Activated CD8-positive, alpha-beta T cell treated with anti-CD3 and anti-CD28 coated beads for 36 hours (primary cell): ENCODE measurements at regions of chr2 and their contacts with region 1.

Region 1: DNA sequence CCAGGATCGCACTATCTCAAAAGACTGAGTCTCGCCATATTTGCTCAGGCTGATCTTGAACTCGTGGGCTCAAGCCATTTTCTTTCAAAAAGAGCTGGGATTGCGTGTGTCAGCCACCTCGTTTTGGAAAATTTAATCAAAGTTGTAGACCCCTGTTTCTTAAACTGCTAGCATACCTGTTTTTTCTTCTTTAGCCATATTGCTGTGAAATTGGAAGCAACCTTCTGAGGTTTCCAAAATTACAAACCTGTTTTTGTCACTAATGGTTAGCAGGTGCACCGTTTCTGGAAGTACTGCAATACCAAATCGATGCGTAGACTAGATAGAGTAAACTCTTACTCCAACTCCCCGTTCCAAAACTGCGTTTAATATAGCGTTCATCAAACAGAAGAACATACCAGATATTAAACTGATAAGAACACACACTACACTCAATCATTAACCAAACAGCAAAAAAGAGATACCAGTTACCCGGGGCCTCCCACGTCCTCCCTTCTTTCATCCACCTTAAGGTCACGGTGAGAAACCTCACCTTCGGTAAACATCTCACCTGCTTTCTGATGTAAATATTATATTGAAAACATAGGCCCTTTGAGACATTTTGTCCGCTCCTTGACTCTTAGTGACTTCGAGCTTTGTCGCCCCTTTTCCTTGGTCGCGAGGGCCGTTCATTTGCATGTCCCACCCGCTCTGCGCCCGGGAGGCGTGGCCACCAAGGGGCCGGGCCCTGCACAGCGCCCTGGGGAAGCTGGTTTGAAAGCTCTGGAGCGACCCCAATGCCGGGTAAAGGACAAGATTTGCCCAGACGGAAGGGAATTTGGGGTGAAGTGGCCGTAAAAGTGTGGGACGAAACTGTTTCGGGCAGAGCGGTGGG is at the start of gene RNU2-63P:
- DNase-seq: peak; percentile 81
- ATAC-seq: peak; percentile 89
- H3K4me3 Mint-ChIP-seq: peak within 1 kb of the TSS; percentile 98
- H3K27ac Mint-ChIP-seq: peak within 1 kb of the TSS; percentile 100
- H3K4me1 Mint-ChIP-seq: peaks cover 16% of the 10 kb centered on the region
- H3K27me3 Mint-ChIP-seq: peaks cover 2% of the 10 kb centered on the region
- CTCF ChIP-seq: no peak
- total RNA-seq, gene RNU2-63P: 6.0 to 7.6 TPM

Region 2: GRCh38 chr2:88027697-88028389 is 11.5 kb after region 1 on chr2:
- CTCF ChIA-PET with region 1: no interaction called
- POLR2A ChIA-PET with region 1: interaction called, 16 read pairs
- intact Hi-C with region 1: no loop called
- DNase-seq: no peak
- ATAC-seq: peak; percentile 56
- H3K4me3 Mint-ChIP-seq: peak overlapping the region; percentile 18
- H3K27ac Mint-ChIP-seq: peak overlapping the region; percentile 49
- H3K4me1 Mint-ChIP-seq: peaks cover 11% of the 10 kb centered on the region
- H3K27me3 Mint-ChIP-seq: no peaks in the 10 kb centered on the region
- CTCF ChIP-seq: no peak

Region 3: GRCh38 chr2:88038263-88039105 is 22.2 kb after region 1 on chr2:
- CTCF ChIA-PET with region 1: no interaction called
- POLR2A ChIA-PET with region 1: interaction called, 12 read pairs
- intact Hi-C with region 1: no loop called
- DNase-seq: no peak
- ATAC-seq: peak; percentile 84
- H3K4me3 Mint-ChIP-seq: no peak overlapping the region
- H3K27ac Mint-ChIP-seq: peak overlapping the region; percentile 65
- H3K4me1 Mint-ChIP-seq: peaks cover 42% of the 10 kb centered on the region
- H3K27me3 Mint-ChIP-seq: no peaks in the 10 kb centered on the region
- CTCF ChIP-seq: no peak

Region 4: DNA sequence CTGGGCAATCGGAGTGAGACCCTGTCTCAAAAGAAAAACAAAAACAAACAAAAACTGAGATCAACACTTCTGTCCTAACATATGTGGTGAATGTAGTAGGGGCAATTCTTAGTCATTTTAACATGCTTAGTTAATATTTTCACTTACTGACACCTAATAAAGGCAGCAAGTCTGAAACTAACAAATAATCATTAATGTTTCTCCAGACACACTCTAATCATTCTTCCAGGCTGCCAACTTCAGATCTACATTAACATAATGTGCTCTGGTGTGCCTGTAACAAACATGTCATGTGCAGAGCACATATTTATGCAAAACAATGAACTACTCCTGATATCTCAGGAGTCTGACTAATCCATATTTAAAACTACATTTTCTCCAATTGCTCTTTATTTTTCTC is 33.3 kb after region 1 on chr2:
- CTCF ChIA-PET with region 1: interaction called, 5 read pairs
- POLR2A ChIA-PET with region 1: interaction called, 21 read pairs
- intact Hi-C with region 1: no loop called
- DNase-seq: no peak
- ATAC-seq: no peak
- H3K4me3 Mint-ChIP-seq: no peak overlapping the region
- H3K27ac Mint-ChIP-seq: peak overlapping the region; percentile 61
- H3K4me1 Mint-ChIP-seq: peaks cover 71% of the 10 kb centered on the region
- H3K27me3 Mint-ChIP-seq: no peaks in the 10 kb centered on the region
- CTCF ChIP-seq: no peak